GM12878 (cell line): ENCODE measurements at regions of chr1 and their contacts with region 1.

Region 1: GRCh38 chr1:66253330-66253921 is 280.5 kb upstream of the SGIP1 start:
- DNase-seq: peak; percentile 55
- ATAC-seq: peak; percentile 90
- H3K4me3 ChIP-seq: no peak overlapping the region
- H3K27ac ChIP-seq: no peak overlapping the region
- H3K4me1 ChIP-seq: peaks cover 1% of the 10 kb centered on the region; the same call in 1 of the 2 replicates
- H3K27me3 ChIP-seq: no peaks in the 10 kb centered on the region
- CTCF ChIP-seq: peak; percentile 75 to 92 (median 81)
- EP300 ChIP-seq: no peak
- POLR2A ChIP-seq: no peak
- RAD21 ChIP-seq: peak; percentile 100

Region 2: DNA sequence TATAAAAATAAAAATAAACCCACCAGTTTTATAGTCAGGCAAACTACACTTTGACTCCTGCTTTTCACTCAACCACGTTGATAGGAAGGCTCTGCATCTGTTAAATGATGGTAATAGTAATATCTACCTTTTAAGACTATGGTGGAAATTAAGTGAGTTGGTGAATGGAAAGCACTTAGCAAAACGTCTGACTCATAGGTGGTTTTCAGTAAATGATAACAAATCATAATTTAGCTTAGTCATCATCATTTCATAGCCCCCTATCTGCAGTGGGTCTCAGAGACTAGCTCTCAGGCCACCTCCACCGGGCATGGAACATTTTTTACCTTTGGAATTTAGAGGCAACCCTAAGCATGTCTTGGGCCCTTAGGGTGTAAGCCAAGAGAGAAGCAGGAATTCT is 300.7 kb before region 1 on chr1:
- CTCF ChIA-PET with region 1: interaction called, 10 read pairs
- POLR2A ChIA-PET with region 1: no interaction called
- RAD21 ChIA-PET with region 1: interaction called, 4 read pairs
- SMC1A ChIA-PET with region 1: interaction called, 5 read pairs
- in situ Hi-C with region 1: no loop called
- intact Hi-C with region 1: no loop called
- DNase-seq: no peak
- ATAC-seq: no peak
- H3K4me3 ChIP-seq: no peak overlapping the region
- H3K27ac ChIP-seq: no peak overlapping the region
- H3K4me1 ChIP-seq: no peaks in the 10 kb centered on the region
- H3K27me3 ChIP-seq: peaks cover 0 to 2% of the 10 kb centered on the region in 2 experiments; a peak in 1 of 4 replicates
- CTCF ChIP-seq: no peak
- EP300 ChIP-seq: no peak
- POLR2A ChIP-seq: no peak
- RAD21 ChIP-seq: no peak

Region 3: GRCh38 chr1:66197785-66198184 is 55.6 kb before region 1 on chr1:
- CTCF ChIA-PET with region 1: no interaction called
- POLR2A ChIA-PET with region 1: no interaction called
- RAD21 ChIA-PET with region 1: no interaction called
- SMC1A ChIA-PET with region 1: no interaction called
- in situ Hi-C with region 1: no loop called
- intact Hi-C with region 1: no loop called
- DNase-seq: no peak
- ATAC-seq: no peak
- H3K4me3 ChIP-seq: no peak overlapping the region
- H3K27ac ChIP-seq: no peak overlapping the region
- H3K4me1 ChIP-seq: no peaks in the 10 kb centered on the region
- H3K27me3 ChIP-seq: no peaks in the 10 kb centered on the region
- CTCF ChIP-seq: no peak
- EP300 ChIP-seq: no peak
- POLR2A ChIP-seq: no peak
- RAD21 ChIP-seq: no peak

Region 4: GRCh38 chr1:66331657-66332547 is 78.5 kb after region 1 on chr1:
- CTCF ChIA-PET with region 1: interaction called, 7 read pairs
- POLR2A ChIA-PET with region 1: no interaction called
- RAD21 ChIA-PET with region 1: interaction called, 6 read pairs
- SMC1A ChIA-PET with region 1: interaction called, 9 read pairs
- in situ Hi-C with region 1: no loop called
- intact Hi-C with region 1: loop called (anchors 1 kb)
- DNase-seq: no peak
- ATAC-seq: peak; percentile 13
- H3K4me3 ChIP-seq: peak overlapping the region; percentile 81
- H3K27ac ChIP-seq: peak overlapping the region; percentile 93
- H3K4me1 ChIP-seq: peaks cover 49% of the 10 kb centered on the region
- H3K27me3 ChIP-seq: no peaks in the 10 kb centered on the region
- CTCF ChIP-seq: no peak
- EP300 ChIP-seq: peak in 1 of 2 experiments; percentile 41; a peak in 1 of 4 replicates
- POLR2A ChIP-seq: peak; percentile 48; the same call in 1 of the 2 replicates
- RAD21 ChIP-seq: no peak

Region 5: GRCh38 chr1:66350001-66350547 is 96.6 kb after region 1 on chr1:
- CTCF ChIA-PET with region 1: interaction called, 86 read pairs
- POLR2A ChIA-PET with region 1: interaction called, 5 read pairs
- RAD21 ChIA-PET with region 1: interaction called, 131 read pairs
- SMC1A ChIA-PET with region 1: interaction called, 153 read pairs
- in situ Hi-C with region 1: no loop called
- intact Hi-C with region 1: loop called (anchors 5 kb)
- DNase-seq: no peak
- ATAC-seq: peak; percentile 64
- H3K4me3 ChIP-seq: peak overlapping the region; percentile 52; the same call in 1 of the 2 replicates
- H3K27ac ChIP-seq: peak overlapping the region; percentile 88
- H3K4me1 ChIP-seq: peaks cover 56% of the 10 kb centered on the region
- H3K27me3 ChIP-seq: no peaks in the 10 kb centered on the region
- CTCF ChIP-seq: no peak
- EP300 ChIP-seq: peak; percentile 98 to 99
- POLR2A ChIP-seq: 0 out of 2 replicates have a peak, but pooled peaks have one; percentile 31
- RAD21 ChIP-seq: no peak

Region 6: GRCh38 chr1:66436378-66437145 is 183.1 kb after region 1 on chr1:
- CTCF ChIA-PET with region 1: interaction called, 595 read pairs
- POLR2A ChIA-PET with region 1: no interaction called
- RAD21 ChIA-PET with region 1: interaction called, 519 read pairs
- SMC1A ChIA-PET with region 1: interaction called, 663 read pairs
- in situ Hi-C with region 1: loop called (anchors 5 kb)
- intact Hi-C with region 1: no loop called
- DNase-seq: peak; percentile 44
- ATAC-seq: peak; percentile 85
- H3K4me3 ChIP-seq: no peak overlapping the region
- H3K27ac ChIP-seq: peak overlapping the region; percentile 7; the same call in 1 of the 2 replicates
- H3K4me1 ChIP-seq: peaks cover 31% of the 10 kb centered on the region
- H3K27me3 ChIP-seq: no peaks in the 10 kb centered on the region
- CTCF ChIP-seq: peak; percentile 27 to 56 (median 50); a peak in 5 of 6 replicates
- EP300 ChIP-seq: no peak
- POLR2A ChIP-seq: no peak
- RAD21 ChIP-seq: peak; percentile 58

Region 7: DNA sequence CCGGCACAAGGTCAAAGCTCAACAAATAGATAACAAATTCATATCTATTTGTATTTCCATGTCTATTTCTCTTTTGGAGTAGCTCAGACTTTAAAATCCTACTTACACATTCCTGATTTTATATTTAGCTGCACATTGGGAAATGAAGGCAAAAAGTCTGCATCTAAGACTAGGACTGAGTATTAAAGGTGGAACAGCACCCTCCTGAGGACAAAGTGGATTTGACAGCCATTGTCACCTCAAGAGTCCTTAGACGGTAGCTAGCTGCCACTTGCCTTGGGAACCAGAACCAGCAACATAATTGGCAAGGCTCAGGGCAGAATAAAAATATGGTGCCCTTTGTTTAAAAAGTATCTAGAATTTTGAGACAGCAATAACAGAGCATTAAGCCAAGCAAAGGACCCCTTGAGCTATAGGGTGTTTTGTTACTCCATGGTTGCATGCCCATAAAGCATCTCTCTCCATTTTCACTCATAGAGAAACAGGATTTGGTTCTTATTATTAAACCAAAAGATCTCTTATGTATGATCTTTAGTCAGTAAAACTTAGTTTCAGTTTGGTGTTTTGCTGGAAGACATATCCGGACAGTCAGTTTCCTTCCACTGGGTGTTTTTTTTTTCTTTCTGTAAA is 250.5 kb after region 1 on chr1:
- CTCF ChIA-PET with region 1: interaction called, 16 read pairs
- POLR2A ChIA-PET with region 1: no interaction called
- RAD21 ChIA-PET with region 1: interaction called, 8 read pairs
- SMC1A ChIA-PET with region 1: interaction called, 7 read pairs
- in situ Hi-C with region 1: no loop called
- intact Hi-C with region 1: no loop called
- DNase-seq: no peak
- ATAC-seq: peak; percentile 89
- H3K4me3 ChIP-seq: no peak overlapping the region
- H3K27ac ChIP-seq: no peak overlapping the region
- H3K4me1 ChIP-seq: no peaks in the 10 kb centered on the region
- H3K27me3 ChIP-seq: 0 out of 4 replicates have a peak, but pooled peaks cover 0 to 1% of the 10 kb centered on the region in 2 experiments
- CTCF ChIP-seq: peak; percentile 57 to 69 (median 63)
- EP300 ChIP-seq: no peak
- POLR2A ChIP-seq: no peak
- RAD21 ChIP-seq: peak; percentile 56

Region 8: DNA sequence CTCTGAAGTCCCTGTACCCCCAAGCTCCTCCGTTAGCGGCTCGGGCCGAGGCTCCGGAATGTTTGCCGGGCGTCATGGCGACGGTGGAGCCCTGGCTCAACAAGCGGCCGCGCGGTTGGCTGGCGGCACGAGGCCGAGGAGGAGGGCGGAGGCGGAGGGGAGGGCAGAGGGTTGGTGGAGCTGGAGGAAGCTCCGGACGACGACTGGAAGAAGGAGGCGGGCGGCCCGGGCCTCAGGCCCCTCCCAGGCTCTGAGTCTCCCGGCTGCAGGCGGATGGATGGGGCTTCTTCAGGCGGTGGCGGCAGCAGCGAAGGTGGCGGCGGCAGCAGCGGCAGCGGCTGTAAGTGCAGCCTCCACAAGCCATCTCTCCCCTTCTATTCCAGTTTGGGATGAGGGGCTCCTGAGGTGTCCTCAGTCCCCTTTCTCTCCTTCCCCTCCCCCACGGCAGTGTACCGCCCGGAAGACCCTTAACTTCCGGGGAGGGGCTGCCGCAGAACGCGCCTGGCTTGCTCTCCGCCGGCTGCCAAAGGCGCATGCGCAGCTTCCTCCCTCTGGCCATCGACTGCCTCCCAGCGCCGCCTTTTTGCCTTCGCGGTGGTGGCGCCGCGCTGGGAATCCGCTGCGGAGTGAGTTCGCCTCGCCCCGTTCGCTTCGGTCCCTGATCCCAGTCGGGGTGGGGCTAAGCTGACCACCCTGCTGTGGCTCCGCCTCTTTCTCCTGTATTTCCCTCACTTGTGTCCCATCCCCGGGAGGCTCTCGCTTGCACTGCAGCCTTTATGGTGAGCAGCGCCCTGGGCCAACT is 671.5 kb after region 1 on chr1 and contains the starts of genes DNAI4 and MIER1:
- CTCF ChIA-PET with region 1: no interaction called
- POLR2A ChIA-PET with region 1: no interaction called
- RAD21 ChIA-PET with region 1: no interaction called
- SMC1A ChIA-PET with region 1: no interaction called
- in situ Hi-C with region 1: loop called (anchors 25 kb)
- intact Hi-C with region 1: no loop called
- DNase-seq: peak; percentile 87
- ATAC-seq: peak; percentile 96
- H3K4me3 ChIP-seq: peak within 1 kb of the TSS; percentile 79
- H3K27ac ChIP-seq: peak within 1 kb of the TSS; percentile 83
- H3K4me1 ChIP-seq: peaks cover 10% of the 10 kb centered on the region; the same call in 1 of the 2 replicates
- H3K27me3 ChIP-seq: no peaks in the 10 kb centered on the region
- CTCF ChIP-seq: peak; percentile 14 to 30 (median 21); a peak in 3 of 6 replicates
- EP300 ChIP-seq: no peak
- POLR2A ChIP-seq: peak; percentile 85
- RAD21 ChIP-seq: no peak
- polyA plus RNA-seq, gene DNAI4: 0.15 to 0.21 TPM
- polyA plus RNA-seq, gene MIER1: 16.1 to 24.6 TPM